Posterior vena cava (tissue), 2 donors: ENCODE measurements at regions of chr2 and their contacts with region 1.

Region 1: DNA sequence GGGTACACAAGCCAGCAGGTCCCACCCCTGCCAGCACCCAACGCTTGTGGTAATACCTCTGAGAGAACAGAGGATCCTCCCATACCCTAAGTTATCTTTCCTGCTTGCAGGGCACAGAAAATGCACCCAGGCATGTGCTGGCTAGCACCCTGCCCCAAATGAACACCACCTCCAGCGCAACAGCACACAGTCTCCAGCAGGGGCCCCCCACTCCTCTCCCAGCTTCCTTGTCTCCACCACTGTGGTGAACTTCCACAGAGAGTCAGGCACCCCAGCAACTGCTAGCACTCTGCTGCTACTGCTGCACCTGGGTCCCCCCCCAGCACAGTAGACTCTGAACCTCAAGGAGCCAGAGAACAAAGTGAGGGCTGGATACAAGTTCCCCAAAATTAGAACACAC is 216.8 kb upstream of the CNTNAP5 start:
- DNase-seq: no peak

Region 2: GRCh38 chr2:123928358-123928757 is 120.1 kb after region 1 on chr2:
- intact Hi-C with region 1: no loop called
- DNase-seq: no peak

Region 3: GRCh38 chr2:124248386-124248785 is 440.1 kb after region 1 on chr2:
- intact Hi-C with region 1: loop called in 1 of 2 experiments (anchors 5 kb)
- DNase-seq: no peak